Natural killer cell (primary cell): ENCODE measurements at regions of chr2 and their contacts with region 1.

Region 1: GRCh38 chr2:191218292-191218898 is 26.8 kb upstream of the MYO1B start:
- DNase-seq: peak; percentile 23 to 64
- ATAC-seq: peak; percentile 68 to 86 (median 83)
- H3K4me3 ChIP-seq: no peak overlapping the region
- H3K4me3 Mint-ChIP-seq: no peak overlapping the region
- H3K27ac ChIP-seq: no peak overlapping the region
- H3K27ac Mint-ChIP-seq: no peak overlapping the region
- H3K4me1 ChIP-seq: no peaks in the 10 kb centered on the region
- H3K4me1 Mint-ChIP-seq: peaks cover 16 to 20% of the 10 kb centered on the region in 2 donors
- H3K27me3 ChIP-seq: no peaks in the 10 kb centered on the region
- H3K27me3 Mint-ChIP-seq: peaks cover 7 to 8% of the 10 kb centered on the region in 2 donors
- CTCF ChIP-seq: peak; percentile 69

Region 2: GRCh38 chr2:191521608-191522208 is 303.3 kb after region 1 on chr2:
- intact Hi-C with region 1: loop called (anchors 1 kb)
- DNase-seq: peak in 1 of 2 donors; percentile 52
- ATAC-seq: no peak
- H3K4me3 ChIP-seq: no peak overlapping the region
- H3K4me3 Mint-ChIP-seq: no peak overlapping the region
- H3K27ac ChIP-seq: no peak overlapping the region
- H3K27ac Mint-ChIP-seq: no peak overlapping the region
- H3K4me1 ChIP-seq: no peaks in the 10 kb centered on the region
- H3K4me1 Mint-ChIP-seq: no peaks in the 10 kb centered on the region
- H3K27me3 ChIP-seq: no peaks in the 10 kb centered on the region
- H3K27me3 Mint-ChIP-seq: peaks cover 8 to 30% of the 10 kb centered on the region in 2 donors
- CTCF ChIP-seq: peak; percentile 72